IMR-90 (cell line): ENCODE measurements at regions of chr6 and their contacts with region 1.

Region 1: DNA sequence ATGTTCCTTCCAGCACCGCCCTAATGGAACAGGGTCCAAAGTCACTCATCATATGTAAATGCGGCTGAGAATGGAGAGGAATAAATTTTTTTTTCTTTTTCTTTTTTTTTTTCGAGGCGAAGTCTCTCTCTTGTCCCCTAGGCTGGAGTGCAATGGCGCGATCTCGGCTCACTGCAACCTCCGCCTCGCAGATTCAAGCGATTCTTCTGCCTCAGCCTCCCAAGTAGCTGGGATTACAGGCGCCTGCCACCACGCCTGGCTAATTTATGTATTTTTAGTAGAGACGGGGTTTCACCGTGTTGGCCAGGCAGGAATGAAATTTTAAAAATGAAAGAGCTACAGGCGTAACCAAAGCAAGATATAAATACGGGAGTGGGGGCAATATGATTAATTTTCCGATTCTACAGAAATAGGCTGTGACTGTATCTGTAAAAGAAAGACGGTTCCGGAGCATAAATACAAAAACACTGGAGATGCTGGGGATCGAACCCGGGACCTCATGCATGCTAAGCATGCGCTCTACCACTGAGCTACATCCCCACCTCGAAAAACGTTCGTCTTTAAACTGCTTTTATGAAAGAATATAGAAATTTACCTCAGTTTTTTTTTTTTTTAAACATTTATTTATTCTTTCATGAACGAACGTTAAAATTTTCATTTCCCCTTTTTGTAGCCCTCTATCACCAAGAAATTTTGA is 132.2 kb downstream of the GPX5 start:
- DNase-seq: peak; percentile 69
- ATAC-seq: peak; percentile 98
- H3K4me3 ChIP-seq: peak overlapping the region; percentile 53
- H3K27ac ChIP-seq: no peak overlapping the region
- H3K4me1 ChIP-seq: no peaks in the 10 kb centered on the region
- H3K27me3 ChIP-seq: peaks cover 3% of the 10 kb centered on the region; the same call in 1 of the 2 replicates
- CTCF ChIP-seq: no peak
- POLR2A ChIP-seq: no peak
- RAD21 ChIP-seq: no peak

Region 2: DNA sequence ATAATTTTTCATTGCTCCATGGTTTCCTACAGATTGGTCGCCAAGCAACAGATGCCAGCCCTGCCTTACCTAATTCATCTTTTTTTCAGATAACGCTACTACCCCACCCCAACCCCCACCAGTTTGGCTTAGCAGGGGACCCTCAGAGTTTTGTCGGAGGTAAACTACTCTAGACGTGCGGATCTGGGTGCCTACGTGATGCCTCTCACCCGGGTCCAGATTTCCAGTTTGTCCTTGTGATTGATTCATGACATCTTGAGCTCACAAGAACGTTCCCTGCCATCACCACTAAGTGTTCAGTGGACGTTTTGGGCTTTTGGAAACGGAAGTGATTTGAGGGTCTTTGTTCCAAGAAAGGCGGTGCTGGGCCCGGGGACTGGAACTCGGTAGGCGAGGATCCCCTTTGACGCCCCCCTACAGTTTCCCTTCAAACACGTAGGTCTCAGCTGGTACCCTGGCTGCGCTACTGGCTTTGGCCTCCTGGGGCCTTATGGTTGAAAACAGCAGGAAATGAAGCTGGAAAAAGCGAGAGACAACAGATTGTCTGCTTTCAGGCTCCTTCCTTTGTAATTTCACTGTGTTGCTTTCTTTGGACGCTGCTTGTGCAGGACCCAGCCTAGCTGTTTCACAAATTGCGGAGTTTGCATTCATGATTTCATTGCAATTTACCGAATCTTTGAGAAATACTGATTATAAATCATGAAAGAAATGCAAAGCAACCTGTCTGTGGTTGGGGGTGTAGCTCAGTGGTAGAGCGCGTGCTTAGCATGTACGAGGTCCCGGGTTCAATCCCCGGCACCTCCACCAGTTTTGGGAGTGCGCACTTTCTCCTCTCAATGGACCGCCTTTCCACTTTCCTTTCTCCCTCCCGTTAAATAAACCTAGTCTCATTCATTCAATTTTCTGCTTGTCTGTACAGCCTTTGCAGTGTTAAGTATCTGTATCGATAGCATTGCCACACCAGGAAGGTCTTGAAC is 51.2 kb before region 1 on chr6:
- CTCF ChIA-PET with region 1: no interaction called
- POLR2A ChIA-PET with region 1: no interaction called
- dilution Hi-C with region 1: no loop called
- in situ Hi-C with region 1: no loop called
- intact Hi-C with region 1: loop called (anchors 5 kb)
- DNase-seq: peak; percentile 72
- ATAC-seq: peak; percentile 99
- H3K4me3 ChIP-seq: peak overlapping the region; percentile 50
- H3K27ac ChIP-seq: no peak overlapping the region
- H3K4me1 ChIP-seq: no peaks in the 10 kb centered on the region
- H3K27me3 ChIP-seq: no peaks in the 10 kb centered on the region
- CTCF ChIP-seq: peak; percentile 25; the same call in 1 of the 2 replicates
- POLR2A ChIP-seq: no peak
- RAD21 ChIP-seq: no peak